K562 (cell line): ENCODE measurements at regions of chr12 and their contacts with region 1.

Region 1: DNA sequence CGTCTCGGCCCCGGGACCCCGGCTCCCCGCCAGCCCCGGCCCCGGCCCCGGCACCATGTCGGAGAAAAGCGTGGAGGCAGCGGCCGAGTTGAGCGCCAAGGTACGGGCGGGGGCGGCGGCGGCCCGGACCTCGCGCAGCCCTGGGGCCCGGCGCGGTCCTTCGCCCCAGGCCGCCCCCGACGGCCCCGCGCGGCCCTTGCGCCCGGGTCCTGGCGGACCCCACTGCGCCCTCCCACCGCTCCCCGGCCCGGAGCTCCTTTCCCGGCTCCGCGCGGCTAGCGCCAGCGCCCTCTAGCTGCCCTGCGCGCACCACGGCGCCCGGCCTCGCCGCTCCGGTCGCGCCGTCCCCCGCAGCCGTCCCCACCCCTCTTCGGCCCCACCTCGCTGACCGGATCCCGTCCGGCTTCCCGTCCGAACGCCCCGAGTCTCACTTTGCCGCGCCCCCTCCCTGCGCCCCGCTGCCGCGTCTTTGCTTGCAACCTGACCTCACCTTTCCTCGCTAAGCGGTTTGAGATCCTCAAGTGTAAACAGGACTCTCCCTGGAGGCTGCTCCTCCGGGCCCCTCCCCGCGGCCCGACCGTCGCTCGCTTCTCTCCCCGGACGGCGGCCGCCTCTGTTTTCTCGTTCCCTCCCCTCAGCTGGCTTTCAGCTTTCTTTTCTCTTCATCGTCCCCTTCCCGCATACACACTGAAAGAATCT is 637 bp downstream of the PTMS start:
- DNase-seq: peak; percentile 65 to 81 (median 71)
- ATAC-seq: peak; percentile 73
- H3K4me3 ChIP-seq: peak overlapping the region; percentile 80
- H3K27ac ChIP-seq: peak overlapping the region; percentile 89
- H3K4me1 ChIP-seq: peaks cover 29 to 34% of the 10 kb centered on the region in 2 experiments; a peak in 4 of 5 replicates
- H3K27me3 ChIP-seq: no peaks in the 10 kb centered on the region; a peak in 1 of 5 replicates
- CTCF ChIP-seq: peak; percentile 36 to 85 (median 60)
- EP300 ChIP-seq: no peak
- POLR2A ChIP-seq: no peak; the same call in 1 of the 2 replicates
- RAD21 ChIP-seq: peak in 1 of 2 experiments; percentile 27; a peak in 1 of 4 replicates

Region 2: GRCh38 chr12:6653987-6654386 is 112.8 kb before region 1 on chr12:
- CTCF ChIA-PET with region 1: no interaction called
- POLR2A ChIA-PET with region 1: no interaction called
- in situ Hi-C with region 1: no loop called
- intact Hi-C with region 1: no loop called
- DNase-seq: no peak
- ATAC-seq: no peak
- H3K4me3 ChIP-seq: no peak overlapping the region
- H3K27ac ChIP-seq: no peak overlapping the region
- H3K4me1 ChIP-seq: no peaks in the 10 kb centered on the region; a peak in 2 of 5 replicates
- H3K27me3 ChIP-seq: no peaks in the 10 kb centered on the region
- CTCF ChIP-seq: no peak
- EP300 ChIP-seq: no peak
- POLR2A ChIP-seq: no peak
- RAD21 ChIP-seq: no peak

Region 3: GRCh38 chr12:6752921-6753771 is 13.7 kb before region 1 on chr12 and contains the start of gene MLF2:
- CTCF ChIA-PET with region 1: interaction called, 3 read pairs
- POLR2A ChIA-PET with region 1: interaction called, 10 read pairs
- in situ Hi-C with region 1: no loop called
- intact Hi-C with region 1: loop called (anchors 1 kb)
- DNase-seq: peak; percentile 93 to 97 (median 94)
- ATAC-seq: peak; percentile 97
- H3K4me3 ChIP-seq: peak within 1 kb of the TSS; percentile 99
- H3K27ac ChIP-seq: peak within 1 kb of the TSS; percentile 99
- H3K4me1 ChIP-seq: peaks cover 22 to 25% of the 10 kb centered on the region in 2 experiments
- H3K27me3 ChIP-seq: no peaks in the 10 kb centered on the region
- CTCF ChIP-seq: peak in 1 of 3 experiments; percentile 93; a peak in 3 of 6 replicates
- EP300 ChIP-seq: 0 out of 2 replicates have a peak, but pooled peaks have one; percentile 15
- POLR2A ChIP-seq: peak; percentile 90
- RAD21 ChIP-seq: no peak; a peak in 1 of 4 replicates
- polyA plus RNA-seq, gene MLF2: 11.4 to 15.6 TPM

Region 4: DNA sequence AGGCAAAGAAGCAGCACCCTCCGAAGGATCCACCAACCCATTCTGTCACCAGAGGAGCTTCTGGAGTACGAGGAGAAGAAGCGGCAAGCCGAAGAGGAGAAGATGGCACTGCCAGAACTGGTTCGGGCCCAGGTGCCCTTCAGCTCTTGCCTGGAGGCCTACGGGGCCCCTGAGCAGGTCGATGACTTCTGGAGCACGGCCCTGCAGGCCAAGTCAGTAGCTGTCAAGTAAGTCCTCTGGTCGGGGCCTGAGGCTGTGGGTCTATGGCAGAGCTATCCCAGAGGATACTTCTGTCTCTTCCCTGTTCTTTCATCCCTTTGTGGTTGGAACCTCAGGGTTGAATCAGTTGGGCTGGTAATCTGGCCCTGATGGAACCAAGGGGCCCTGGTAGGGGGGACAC is 94.6 kb after region 1 on chr12:
- CTCF ChIA-PET with region 1: no interaction called
- POLR2A ChIA-PET with region 1: no interaction called
- in situ Hi-C with region 1: no loop called
- intact Hi-C with region 1: no loop called
- DNase-seq: no peak
- ATAC-seq: no peak
- H3K4me3 ChIP-seq: no peak overlapping the region
- H3K27ac ChIP-seq: no peak overlapping the region
- H3K4me1 ChIP-seq: peaks cover 5 to 6% of the 10 kb centered on the region in 2 experiments; a peak in 4 of 5 replicates
- H3K27me3 ChIP-seq: no peaks in the 10 kb centered on the region
- CTCF ChIP-seq: no peak
- EP300 ChIP-seq: no peak
- POLR2A ChIP-seq: no peak
- RAD21 ChIP-seq: no peak